Activated CD8-positive, alpha-beta T cell treated with anti-CD3 and anti-CD28 coated beads, Interleukin-2, amount 10 ng/mL, durations not matched to agents 7 days and 5 days (primary cell): ENCODE measurements at regions of chr15 and their contacts with region 1.

Region 1: GRCh38 chr15:40344631-40345120 is 3.9 kb upstream of the CCDC9B start:
- DNase-seq: peak; percentile 83
- ATAC-seq: peak; percentile 85
- H3K4me3 Mint-ChIP-seq: no peak overlapping the region
- H3K27ac Mint-ChIP-seq: no peak overlapping the region
- H3K4me1 Mint-ChIP-seq: peaks cover 5% of the 10 kb centered on the region
- H3K27me3 Mint-ChIP-seq: no peaks in the 10 kb centered on the region

Region 2: DNA sequence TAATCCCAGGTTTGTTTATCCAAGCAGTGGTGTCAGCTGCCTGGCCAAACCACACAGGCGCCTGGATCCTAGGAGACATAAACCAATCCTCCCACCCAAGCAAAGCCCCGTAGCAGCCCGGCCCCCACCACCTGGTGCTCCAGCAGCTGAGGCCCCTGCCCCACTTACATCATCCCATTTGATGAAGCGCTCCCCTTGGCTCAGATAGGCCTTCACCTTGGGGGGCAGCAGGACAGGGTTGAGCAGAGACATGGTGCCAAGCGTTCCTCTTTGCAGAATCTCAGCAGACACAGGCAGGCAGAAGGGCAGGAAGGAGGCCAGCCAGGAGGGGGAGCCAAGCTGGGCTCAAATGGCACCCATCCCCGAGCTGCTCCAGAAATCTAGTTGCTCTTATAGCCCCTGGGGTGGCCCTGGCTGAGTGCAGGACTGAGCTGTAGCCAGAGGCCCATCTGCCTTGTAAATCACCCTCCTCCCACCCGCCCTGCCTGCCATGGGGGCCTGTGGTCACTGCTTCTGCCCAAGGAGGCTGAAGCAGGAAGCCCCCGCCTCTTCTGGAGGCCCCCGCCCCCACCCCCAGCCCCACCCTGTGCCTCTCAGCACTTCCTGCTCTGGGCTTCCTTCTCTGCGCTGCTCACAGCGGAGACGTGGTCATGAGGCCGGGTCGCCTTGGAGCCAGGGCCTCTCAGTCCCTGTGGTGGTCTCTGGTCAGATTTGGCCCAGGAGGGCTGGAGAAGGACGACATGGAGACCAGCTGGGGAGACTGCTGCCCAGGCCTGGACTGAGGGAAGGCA is 37.1 kb before region 1 on chr15 and contains the start of gene PLCB2:
- CTCF ChIA-PET with region 1: interaction called, 326 read pairs
- POLR2A ChIA-PET with region 1: no interaction called
- DNase-seq: peak; percentile 82
- ATAC-seq: peak; percentile 81
- H3K4me3 Mint-ChIP-seq: peak within 1 kb of the TSS; percentile 99
- H3K27ac Mint-ChIP-seq: peak within 1 kb of the TSS; percentile 98
- H3K4me1 Mint-ChIP-seq: peaks cover 38% of the 10 kb centered on the region
- H3K27me3 Mint-ChIP-seq: peaks cover 13% of the 10 kb centered on the region
- total RNA-seq, gene PLCB2: 133 to 160 TPM

Region 3: DNA sequence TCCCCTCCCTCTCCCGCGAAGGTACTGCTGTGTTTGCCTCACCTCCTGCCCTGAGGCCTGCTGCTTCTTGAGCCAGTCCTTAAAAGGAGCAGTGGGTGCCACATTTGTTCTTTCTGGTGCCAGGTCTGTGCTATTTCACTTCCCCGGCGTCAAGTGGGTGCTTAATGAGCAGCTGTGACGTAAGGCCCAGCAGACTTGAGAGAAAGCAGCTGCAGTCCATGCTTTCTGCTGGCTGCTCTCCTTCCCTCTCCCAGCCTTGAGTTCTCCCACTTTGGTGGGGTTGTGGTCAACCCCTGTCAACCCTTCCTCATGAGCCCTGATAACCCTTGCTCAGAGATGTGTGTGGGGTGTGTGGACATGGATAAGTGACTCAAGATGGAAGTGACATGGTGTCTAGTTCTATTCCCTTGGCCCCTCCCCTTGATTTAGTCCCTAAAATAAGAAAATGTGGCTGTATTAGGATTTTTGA is 14.3 kb before region 1 on chr15:
- CTCF ChIA-PET with region 1: interaction called, 129 read pairs
- POLR2A ChIA-PET with region 1: no interaction called
- DNase-seq: no peak
- ATAC-seq: no peak
- H3K4me3 Mint-ChIP-seq: no peak overlapping the region
- H3K27ac Mint-ChIP-seq: no peak overlapping the region
- H3K4me1 Mint-ChIP-seq: peaks cover 33% of the 10 kb centered on the region
- H3K27me3 Mint-ChIP-seq: no peaks in the 10 kb centered on the region

Region 4: GRCh38 chr15:40367686-40368611 is 23.3 kb after region 1 on chr15:
- CTCF ChIA-PET with region 1: interaction called, 51 read pairs
- POLR2A ChIA-PET with region 1: no interaction called
- DNase-seq: peak; percentile 91
- ATAC-seq: peak; percentile 95
- H3K4me3 Mint-ChIP-seq: peak overlapping the region; percentile 77
- H3K27ac Mint-ChIP-seq: peak overlapping the region; percentile 85
- H3K4me1 Mint-ChIP-seq: peaks cover 33% of the 10 kb centered on the region
- H3K27me3 Mint-ChIP-seq: peaks cover 7% of the 10 kb centered on the region

Region 5: GRCh38 chr15:40398413-40398873 is 53.8 kb after region 1 on chr15:
- CTCF ChIA-PET with region 1: interaction called, 18 read pairs
- POLR2A ChIA-PET with region 1: no interaction called
- DNase-seq: peak; percentile 46
- ATAC-seq: peak; percentile 86
- H3K4me3 Mint-ChIP-seq: peak overlapping the region; percentile 61
- H3K27ac Mint-ChIP-seq: peak overlapping the region; percentile 84
- H3K4me1 Mint-ChIP-seq: peaks cover 31% of the 10 kb centered on the region
- H3K27me3 Mint-ChIP-seq: no peaks in the 10 kb centered on the region

Region 6: GRCh38 chr15:40421246-40422157 is 76.8 kb after region 1 on chr15:
- CTCF ChIA-PET with region 1: interaction called, 82 read pairs
- POLR2A ChIA-PET with region 1: interaction called, 5 read pairs
- DNase-seq: peak; percentile 86
- ATAC-seq: peak; percentile 99
- H3K4me3 Mint-ChIP-seq: no peak overlapping the region
- H3K27ac Mint-ChIP-seq: no peak overlapping the region
- H3K4me1 Mint-ChIP-seq: peaks cover 8% of the 10 kb centered on the region
- H3K27me3 Mint-ChIP-seq: no peaks in the 10 kb centered on the region